ENCODE measurements at regions of chr19 and their contacts with region 1.

Region 1: DNA sequence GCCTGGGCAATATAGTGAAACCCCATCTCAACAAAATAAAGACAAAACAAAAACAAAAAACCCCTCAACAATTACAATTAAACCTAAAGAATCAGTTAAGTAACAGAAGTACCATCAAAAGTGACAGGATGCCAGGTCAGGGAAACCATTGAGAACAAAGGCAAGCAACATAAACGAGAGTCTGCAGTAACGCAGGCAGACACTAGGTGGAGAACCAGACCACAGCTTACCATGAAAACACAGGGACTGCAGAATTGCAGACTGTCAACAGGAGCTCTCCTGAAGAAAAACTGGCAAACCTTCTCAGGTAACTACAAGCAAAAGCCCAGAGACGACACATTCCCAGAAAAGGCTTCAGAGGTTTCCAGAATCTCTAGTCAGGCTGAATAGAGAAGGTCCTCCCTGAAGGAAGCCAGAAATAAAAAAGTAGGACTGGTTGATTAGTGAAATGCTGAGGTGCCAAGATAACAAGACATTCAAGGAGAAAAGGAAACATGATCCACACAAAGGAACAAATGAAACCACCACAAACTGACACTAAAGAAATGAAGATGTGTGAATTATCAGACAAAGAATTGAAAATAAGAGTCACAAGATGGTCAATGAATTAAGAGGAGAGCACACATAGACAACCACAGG is 2.2 kb upstream of the ZNF665 start:
- DNase-seq: peak in 4 of 5 donors; percentile 68 to 79 (median 75)
- ATAC-seq: peak in 3 of 4 donors; percentile 47 to 60 (median 55)
- H3K4me3 ChIP-seq: no peak overlapping the region
- H3K27ac ChIP-seq: peak overlapping the region in 1 of 12 donors; percentile 0
- H3K4me1 ChIP-seq: peaks cover 0 to 33% (median 13%) of the 10 kb centered on the region in 12 donors
- H3K27me3 ChIP-seq: no peaks in the 10 kb centered on the region
- CTCF ChIP-seq: peak; percentile 74 to 95 (median 92)
- POLR2A ChIP-seq: no peak

Region 2: GRCh38 chr19:53076977-53077376 is 118.4 kb before region 1 on chr19:
- intact Hi-C with region 1: loop called in 8 of 10 experiments (anchors 5 to 10 kb)
- DNase-seq: peak in 4 of 5 donors; percentile 49 to 67 (median 60)
- ATAC-seq: peak in 3 of 4 donors; percentile 75 to 86 (median 81)
- H3K4me3 ChIP-seq: no peak overlapping the region
- H3K27ac ChIP-seq: peak overlapping the region in 5 of 12 donors; percentile 21 to 86 (median 58)
- H3K4me1 ChIP-seq: peaks cover 0 to 27% (median 11%) of the 10 kb centered on the region in 12 donors
- H3K27me3 ChIP-seq: no peaks in the 10 kb centered on the region
- CTCF ChIP-seq: peak; percentile 35 to 87 (median 81)
- POLR2A ChIP-seq: no peak

Region 3: DNA sequence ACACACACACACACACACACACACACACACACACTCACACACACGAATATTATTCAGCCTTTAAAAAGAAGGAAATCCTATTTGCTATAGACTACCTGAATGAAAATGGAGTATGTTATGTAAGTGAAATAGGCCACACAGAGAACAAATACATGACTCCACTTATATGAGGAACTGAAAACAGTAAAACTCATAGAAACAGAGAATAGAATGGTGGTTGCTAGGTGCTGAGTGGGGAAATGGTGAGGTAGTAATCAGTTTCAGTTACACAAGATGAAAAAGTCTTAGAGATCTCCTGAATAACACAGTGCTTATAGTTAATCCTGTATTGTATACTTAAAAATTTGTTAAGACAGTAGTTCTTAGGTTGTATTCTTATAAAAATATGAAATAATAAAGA is 51.1 kb after region 1 on chr19:
- intact Hi-C with region 1: loop called in 5 of 10 experiments (anchors 5 to 10 kb)
- DNase-seq: no peak
- ATAC-seq: no peak
- H3K4me3 ChIP-seq: no peak overlapping the region
- H3K27ac ChIP-seq: no peak overlapping the region
- H3K4me1 ChIP-seq: no peaks in the 10 kb centered on the region
- H3K27me3 ChIP-seq: no peaks in the 10 kb centered on the region
- CTCF ChIP-seq: no peak
- POLR2A ChIP-seq: no peak

Region 4: GRCh38 chr19:53357821-53358581 is 162.6 kb after region 1 on chr19:
- intact Hi-C with region 1: loop called in 9 of 10 experiments (anchors 5 to 10 kb)
- DNase-seq: peak in 1 of 5 donors; percentile 15
- ATAC-seq: no peak
- H3K4me3 ChIP-seq: no peak overlapping the region
- H3K27ac ChIP-seq: no peak overlapping the region
- H3K4me1 ChIP-seq: no peaks in the 10 kb centered on the region
- H3K27me3 ChIP-seq: no peaks in the 10 kb centered on the region
- CTCF ChIP-seq: no peak
- POLR2A ChIP-seq: no peak

Region 5: GRCh38 chr19:53467485-53468262 is 272.3 kb after region 1 on chr19 and contains the start of gene ZNF813:
- intact Hi-C with region 1: loop called in 2 of 10 experiments (anchors 5 kb)
- DNase-seq: peak; percentile 94 to 98 (median 97)
- ATAC-seq: peak; percentile 98 to 99 (median 99)
- H3K4me3 ChIP-seq: peak within 1 kb of the TSS; percentile 51 to 96 (median 81)
- H3K27ac ChIP-seq: peak within 1 kb of the TSS in 11 of 12 donors; percentile 27 to 81 (median 71)
- H3K4me1 ChIP-seq: peaks cover 0 to 23% (median 10%) of the 10 kb centered on the region in 12 donors
- H3K27me3 ChIP-seq: peaks cover 0 to 20% (median 0%) of the 10 kb centered on the region in 9 donors
- CTCF ChIP-seq: no peak
- POLR2A ChIP-seq: peak in 1 of 2 donors; percentile 51
- total RNA-seq, gene ZNF813: 0.82 to 2.5 (median 1.2) TPM

Measured in heart left ventricle (tissue), 16 donors.